Psoas muscle (tissue), 8 donors: ENCODE measurements at regions of chr9 and their contacts with region 1.

Region 1: GRCh38 chr9:19174127-19174912 is 47.0 kb upstream of the PLIN2 start:
- DNase-seq: peak; percentile 83 to 89
- ATAC-seq: peak; percentile 93 to 99 (median 96)
- H3K4me3 ChIP-seq: no peak overlapping the region
- H3K27ac ChIP-seq: no peak overlapping the region
- H3K4me1 ChIP-seq: no peaks in the 10 kb centered on the region
- H3K27me3 ChIP-seq: no peaks in the 10 kb centered on the region
- CTCF ChIP-seq: peak; percentile 73

Region 2: GRCh38 chr9:19048966-19049916 is 125.1 kb before region 1 on chr9 and contains the start of gene RRAGA:
- intact Hi-C with region 1: loop called in 1 of 2 experiments (anchors 5 kb)
- DNase-seq: peak; percentile 95 to 97
- ATAC-seq: peak; percentile 95 to 97 (median 96)
- H3K4me3 ChIP-seq: peak within 1 kb of the TSS; percentile 94
- H3K27ac ChIP-seq: peak within 1 kb of the TSS; percentile 97
- H3K4me1 ChIP-seq: peaks cover 29% of the 10 kb centered on the region
- H3K27me3 ChIP-seq: no peaks in the 10 kb centered on the region
- CTCF ChIP-seq: peak; percentile 87
- total RNA-seq, gene RRAGA: 88.3 to 107 (median 94.2) TPM

Region 3: DNA sequence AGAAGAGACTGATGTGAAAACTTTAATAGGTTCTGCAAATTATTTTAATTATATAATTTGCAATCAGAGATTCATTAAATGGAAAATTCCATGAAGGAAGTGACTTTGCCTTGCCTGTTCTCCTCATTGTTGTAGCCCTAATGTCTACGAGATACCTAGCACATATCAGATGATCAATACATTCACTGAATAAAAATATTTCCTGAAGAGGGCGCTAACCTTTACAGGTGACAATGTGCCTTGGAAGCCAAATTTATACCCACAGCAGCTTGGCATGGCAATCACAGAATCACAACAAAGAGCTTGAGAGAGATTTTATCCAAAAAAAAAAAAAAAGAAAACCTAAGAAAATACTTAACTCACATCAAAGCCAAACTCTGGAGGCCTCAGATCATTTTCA is 89.0 kb before region 1 on chr9:
- intact Hi-C with region 1: loop called (anchors 1 to 5 kb)
- DNase-seq: no peak
- ATAC-seq: peak in 1 of 4 donors; percentile 46
- H3K4me3 ChIP-seq: no peak overlapping the region
- H3K27ac ChIP-seq: no peak overlapping the region
- H3K4me1 ChIP-seq: no peaks in the 10 kb centered on the region
- H3K27me3 ChIP-seq: no peaks in the 10 kb centered on the region
- CTCF ChIP-seq: no peak

Region 4: GRCh38 chr9:19320495-19320894 is 146.2 kb after region 1 on chr9:
- intact Hi-C with region 1: no loop called
- DNase-seq: no peak
- ATAC-seq: no peak
- H3K4me3 ChIP-seq: no peak overlapping the region
- H3K27ac ChIP-seq: no peak overlapping the region
- H3K4me1 ChIP-seq: no peaks in the 10 kb centered on the region
- H3K27me3 ChIP-seq: no peaks in the 10 kb centered on the region
- CTCF ChIP-seq: no peak

Region 5: DNA sequence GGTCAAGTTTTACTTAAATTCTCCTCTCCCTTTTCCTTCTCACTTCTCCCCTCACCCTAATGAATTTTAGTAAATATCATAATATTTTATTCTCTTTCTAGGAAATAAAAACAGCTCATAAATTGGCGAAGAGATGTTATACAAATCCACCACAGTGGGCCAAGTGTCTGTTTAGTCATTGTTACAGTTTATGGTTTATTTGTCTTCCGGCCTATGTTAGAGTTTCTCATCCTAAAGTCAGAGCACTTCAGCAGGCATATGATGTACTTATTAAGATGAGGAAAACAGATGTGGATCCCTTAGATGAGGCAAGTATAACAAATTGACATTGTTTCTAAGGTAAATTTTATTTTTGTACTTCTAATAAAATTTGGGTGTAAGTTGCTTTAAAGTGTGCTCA is 157.6 kb after region 1 on chr9:
- intact Hi-C with region 1: no loop called
- DNase-seq: no peak
- ATAC-seq: no peak
- H3K4me3 ChIP-seq: no peak overlapping the region
- H3K27ac ChIP-seq: no peak overlapping the region
- H3K4me1 ChIP-seq: no peaks in the 10 kb centered on the region
- H3K27me3 ChIP-seq: no peaks in the 10 kb centered on the region
- CTCF ChIP-seq: no peak